WTC11 (cell line): ENCODE measurements at regions of chr17 and their contacts with region 1.

Region 1: DNA sequence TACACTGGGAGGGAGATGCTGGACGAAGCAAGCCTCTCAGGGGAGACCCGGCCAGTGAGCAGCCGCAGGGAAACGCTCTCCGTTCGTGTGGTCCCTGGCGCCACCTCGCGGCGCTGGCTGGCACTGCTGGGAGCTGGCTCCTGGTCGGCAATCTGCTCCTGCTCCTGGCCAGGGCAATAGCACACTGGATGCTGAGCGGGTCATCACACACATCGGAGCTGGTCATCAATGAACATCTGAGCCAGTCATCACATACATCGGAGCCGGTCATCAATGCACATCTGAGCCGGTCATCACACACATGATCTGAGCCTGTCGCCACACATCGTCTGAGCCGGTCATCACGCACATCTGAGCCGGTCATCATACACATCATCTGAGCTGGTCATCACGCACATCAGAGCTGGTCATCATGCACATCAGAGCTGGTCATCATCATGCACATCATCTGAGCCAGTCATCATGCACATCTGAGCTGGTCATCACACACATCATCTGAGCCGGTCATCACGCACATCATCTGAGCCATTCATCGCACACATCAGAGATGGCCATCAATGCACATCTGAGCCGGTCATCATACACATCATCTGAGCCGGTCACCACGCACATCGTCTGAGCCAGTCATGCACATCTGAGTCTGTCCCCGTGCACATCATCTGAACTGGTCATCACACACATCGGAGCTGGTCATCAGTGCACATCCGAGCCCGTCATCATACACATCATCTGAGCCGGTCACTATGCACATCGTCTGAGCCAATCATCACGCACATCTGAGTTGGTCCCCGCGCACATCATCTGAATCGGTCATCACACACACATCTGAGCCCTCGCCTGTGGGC is 217.3 kb downstream of the RBFOX3 start:
- DNase-seq: peak; percentile 93
- ATAC-seq: peak; percentile 70
- H3K4me3 Mint-ChIP-seq: no peak overlapping the region
- H3K27ac Mint-ChIP-seq: no peak overlapping the region
- H3K4me1 Mint-ChIP-seq: peaks cover 3% of the 10 kb centered on the region; the same call in 1 of the 2 replicates
- H3K27me3 Mint-ChIP-seq: peaks cover 21% of the 10 kb centered on the region
- CTCF ChIP-seq: peak; percentile 97

Region 2: DNA sequence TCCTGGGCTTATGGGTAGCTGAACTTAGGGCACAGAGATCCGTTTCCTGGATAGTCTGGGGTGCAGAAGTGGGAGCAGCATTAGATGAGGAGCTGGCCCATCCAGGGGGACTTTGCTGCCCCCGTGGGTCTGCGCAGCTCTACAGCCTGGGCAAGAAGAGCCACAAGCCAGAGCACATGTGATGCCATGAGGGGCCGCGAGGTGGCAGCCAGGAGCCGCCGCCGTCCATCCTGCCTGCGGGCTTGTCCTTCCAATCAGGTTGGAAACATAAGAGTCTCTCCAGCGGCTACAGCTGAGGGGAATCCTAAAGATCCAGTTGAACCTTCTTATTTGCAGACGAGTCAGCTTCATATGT is 347.8 kb before region 1 on chr17:
- CTCF ChIA-PET with region 1: interaction called, 22 read pairs
- POLR2A ChIA-PET with region 1: no interaction called
- DNase-seq: peak; percentile 84
- ATAC-seq: peak; percentile 86
- H3K4me3 Mint-ChIP-seq: no peak overlapping the region
- H3K27ac Mint-ChIP-seq: no peak overlapping the region
- H3K4me1 Mint-ChIP-seq: peaks cover 6% of the 10 kb centered on the region; the same call in 1 of the 2 replicates
- H3K27me3 Mint-ChIP-seq: peaks cover 7% of the 10 kb centered on the region
- CTCF ChIP-seq: peak; percentile 81

Region 3: DNA sequence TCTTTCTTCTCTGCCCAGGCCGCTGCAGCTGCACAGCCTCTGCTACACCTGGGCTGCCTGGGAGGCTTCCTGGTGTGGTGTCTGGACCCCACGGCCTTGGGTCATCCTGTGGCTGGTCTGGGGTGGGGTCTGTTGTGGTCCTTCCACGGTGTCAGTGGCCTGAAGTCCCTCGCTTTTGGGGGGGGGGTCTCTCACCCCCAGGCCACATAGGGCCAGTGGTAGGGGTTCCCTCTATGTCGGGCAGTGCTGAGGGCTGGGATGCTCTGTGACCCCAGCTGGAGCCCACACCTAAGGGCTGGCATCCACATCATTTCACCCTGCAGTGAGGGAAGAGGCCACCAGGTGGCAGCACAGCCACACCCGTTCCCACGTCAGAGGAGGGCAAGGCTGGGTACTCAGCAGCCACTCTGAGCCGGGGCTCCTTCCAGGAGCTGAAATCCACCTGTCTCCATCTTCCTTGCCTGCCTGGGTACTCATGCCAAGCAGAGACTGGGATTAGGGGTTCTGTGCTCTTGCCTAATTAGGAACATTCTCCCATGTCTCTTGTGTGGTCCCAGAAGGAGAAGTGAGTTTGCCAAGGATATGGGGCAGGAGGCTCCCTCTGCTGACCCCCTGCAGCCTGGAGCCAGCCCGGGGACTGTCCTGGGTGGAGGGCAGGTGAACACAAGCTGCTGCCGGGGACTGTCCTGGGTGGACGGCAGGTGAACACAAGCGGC is 306.0 kb before region 1 on chr17:
- CTCF ChIA-PET with region 1: interaction called, 162 read pairs
- POLR2A ChIA-PET with region 1: interaction called, 3 read pairs
- DNase-seq: peak; percentile 89
- ATAC-seq: peak; percentile 85
- H3K4me3 Mint-ChIP-seq: no peak overlapping the region
- H3K27ac Mint-ChIP-seq: no peak overlapping the region
- H3K4me1 Mint-ChIP-seq: no peaks in the 10 kb centered on the region
- H3K27me3 Mint-ChIP-seq: no peaks in the 10 kb centered on the region
- CTCF ChIP-seq: peak; percentile 95

Region 4: GRCh38 chr17:79174905-79175856 is 218.4 kb before region 1 on chr17:
- CTCF ChIA-PET with region 1: interaction called, 11 read pairs
- POLR2A ChIA-PET with region 1: interaction called, 5 read pairs
- DNase-seq: no peak
- ATAC-seq: no peak
- H3K4me3 Mint-ChIP-seq: no peak overlapping the region
- H3K27ac Mint-ChIP-seq: no peak overlapping the region
- H3K4me1 Mint-ChIP-seq: peaks cover 8% of the 10 kb centered on the region; the same call in 1 of the 2 replicates
- H3K27me3 Mint-ChIP-seq: no peaks in the 10 kb centered on the region; the same call in 1 of the 2 replicates
- CTCF ChIP-seq: no peak

Region 5: GRCh38 chr17:79207960-79208359 is 185.6 kb before region 1 on chr17:
- CTCF ChIA-PET with region 1: interaction called, 21 read pairs
- POLR2A ChIA-PET with region 1: no interaction called
- DNase-seq: no peak
- ATAC-seq: no peak; the same call in 1 of the 2 replicates
- H3K4me3 Mint-ChIP-seq: no peak overlapping the region
- H3K27ac Mint-ChIP-seq: no peak overlapping the region
- H3K4me1 Mint-ChIP-seq: peaks cover 25% of the 10 kb centered on the region
- H3K27me3 Mint-ChIP-seq: no peaks in the 10 kb centered on the region
- CTCF ChIP-seq: no peak

Region 6: GRCh38 chr17:79305768-79306423 is 87.7 kb before region 1 on chr17:
- CTCF ChIA-PET with region 1: interaction called, 10 read pairs
- POLR2A ChIA-PET with region 1: no interaction called
- DNase-seq: no peak
- ATAC-seq: no peak
- H3K4me3 Mint-ChIP-seq: no peak overlapping the region
- H3K27ac Mint-ChIP-seq: no peak overlapping the region
- H3K4me1 Mint-ChIP-seq: peaks cover 6% of the 10 kb centered on the region; the same call in 1 of the 2 replicates
- H3K27me3 Mint-ChIP-seq: no peaks in the 10 kb centered on the region
- CTCF ChIP-seq: no peak

Region 7: GRCh38 chr17:79372470-79373238 is 20.9 kb before region 1 on chr17:
- CTCF ChIA-PET with region 1: interaction called, 18 read pairs
- POLR2A ChIA-PET with region 1: no interaction called
- DNase-seq: no peak
- ATAC-seq: no peak
- H3K4me3 Mint-ChIP-seq: no peak overlapping the region
- H3K27ac Mint-ChIP-seq: no peak overlapping the region; the same call in 1 of the 2 replicates
- H3K4me1 Mint-ChIP-seq: peaks cover 18% of the 10 kb centered on the region
- H3K27me3 Mint-ChIP-seq: no peaks in the 10 kb centered on the region
- CTCF ChIP-seq: no peak